ENCODE measurements at regions of chr11 and their contacts with region 1.

Region 1: GRCh38 chr11:113896156-113896879 is 8.3 kb upstream of the HTR3B start:
- DNase-seq: peak; percentile 10
- ATAC-seq: peak; percentile 91
- H3K4me3 ChIP-seq: no peak overlapping the region
- H3K27ac ChIP-seq: no peak overlapping the region
- H3K4me1 ChIP-seq: no peaks in the 10 kb centered on the region
- H3K27me3 ChIP-seq: 0 out of 2 replicates have a peak, but pooled peaks cover 5% of the 10 kb centered on the region
- CTCF ChIP-seq: peak; percentile 67 to 85 (median 75)
- POLR2A ChIP-seq: no peak
- RAD21 ChIP-seq: peak; percentile 79

Region 2: DNA sequence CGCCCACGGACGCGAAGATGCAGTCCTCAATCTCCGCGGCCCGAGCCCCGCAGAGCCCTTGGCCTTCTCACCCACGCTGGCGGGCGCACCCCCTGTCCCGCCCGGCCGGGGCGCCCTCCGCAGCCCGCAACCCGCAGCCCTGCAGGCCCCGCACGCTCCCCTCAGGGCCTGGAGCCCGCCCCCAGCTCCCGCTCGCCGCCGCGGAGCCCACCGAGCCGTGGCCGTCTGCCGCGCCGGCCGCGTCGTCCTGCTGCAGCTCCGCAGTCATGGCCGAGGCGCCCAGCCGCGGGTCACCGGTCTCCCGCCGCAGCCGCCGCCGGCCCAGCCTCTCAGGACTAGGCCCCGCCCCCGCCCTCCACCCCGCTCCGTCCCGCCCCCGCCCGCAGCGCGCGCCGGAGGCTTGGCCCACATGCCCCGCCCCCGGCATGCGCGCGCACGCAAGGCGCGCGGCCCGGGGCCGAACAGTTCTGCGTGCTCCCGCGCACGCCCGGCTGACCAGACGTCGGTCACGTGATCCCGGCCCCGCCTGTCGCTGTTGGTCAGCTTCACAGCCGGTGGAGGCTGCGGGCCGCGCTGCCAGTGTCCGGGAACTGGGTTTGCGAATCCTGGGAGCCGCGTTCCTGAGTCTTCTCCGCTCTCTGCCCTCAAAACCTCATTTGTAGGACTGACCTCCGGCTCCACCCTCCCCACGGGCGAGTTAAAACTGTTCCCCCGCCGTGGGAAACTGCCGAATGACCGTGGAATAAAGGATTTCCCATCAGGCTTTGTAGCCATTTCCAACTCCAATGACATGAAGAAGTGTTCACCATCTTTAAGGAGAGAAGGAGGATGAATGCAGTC is 20.9 kb before region 1 on chr11 and contains the start of gene USP28:
- CTCF ChIA-PET with region 1: interaction called, 10 read pairs
- POLR2A ChIA-PET with region 1: interaction called, 6 read pairs
- RAD21 ChIA-PET with region 1: no interaction called
- intact Hi-C with region 1: no loop called
- DNase-seq: peak; percentile 85
- ATAC-seq: peak; percentile 84
- H3K4me3 ChIP-seq: peak within 1 kb of the TSS; percentile 75 to 80
- H3K27ac ChIP-seq: peak within 1 kb of the TSS; percentile 77
- H3K4me1 ChIP-seq: peaks cover 0 to 22% of the 10 kb centered on the region in 2 experiments; a peak in 3 of 4 replicates
- H3K27me3 ChIP-seq: no peaks in the 10 kb centered on the region
- CTCF ChIP-seq: 0 out of 6 replicates have a peak, but pooled peaks of 1 of the 3 experiments have one; percentile 7
- POLR2A ChIP-seq: peak; percentile 87
- RAD21 ChIP-seq: no peak
- total RNA-seq, gene USP28: 23.5 TPM

Region 3: DNA sequence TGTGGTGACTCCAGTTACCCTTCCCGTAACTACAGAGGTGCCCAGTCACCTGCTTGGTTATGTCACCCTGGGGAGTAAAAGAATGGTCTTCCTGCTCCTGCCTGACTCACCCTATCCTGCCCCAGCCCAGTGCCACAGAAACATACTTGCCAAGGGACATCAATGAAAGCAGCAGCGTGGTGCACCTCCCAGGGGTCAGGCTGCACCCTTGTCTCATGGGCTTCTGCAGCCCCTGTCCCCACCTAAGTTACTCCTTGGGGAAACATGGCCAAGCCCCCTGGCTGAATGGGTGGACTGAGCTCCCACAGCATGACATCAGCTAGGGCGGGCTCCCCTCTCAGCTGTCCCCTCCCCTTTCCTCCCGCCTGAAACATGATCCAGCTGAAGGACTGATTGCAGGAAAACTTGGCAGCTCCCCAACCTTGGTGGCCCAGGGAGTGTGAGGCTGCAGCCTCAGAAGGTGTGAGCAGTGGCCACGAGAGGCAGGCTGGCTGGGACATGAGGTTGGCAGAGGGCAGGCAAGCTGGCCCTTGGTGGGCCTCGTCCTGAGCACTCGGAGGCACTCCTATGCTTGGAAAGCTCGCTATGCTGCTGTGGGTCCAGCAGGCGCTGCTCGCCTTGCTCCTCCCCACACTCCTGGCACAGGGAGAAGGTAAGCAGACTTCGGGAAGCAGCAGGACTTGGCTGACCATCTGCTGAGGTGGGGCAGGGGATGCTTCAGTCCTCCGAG is 78.6 kb after region 1 on chr11 and contains the start of gene HTR3A:
- CTCF ChIA-PET with region 1: interaction called, 5 read pairs
- POLR2A ChIA-PET with region 1: no interaction called
- RAD21 ChIA-PET with region 1: interaction called in 1 of 2 experiments, 5 read pairs
- intact Hi-C with region 1: loop called (anchors 5 kb)
- DNase-seq: peak; percentile 69
- ATAC-seq: peak; percentile 91
- H3K4me3 ChIP-seq: peak within 1 kb of the TSS; percentile 7 to 29; a peak in 3 of 4 replicates
- H3K27ac ChIP-seq: no peak within 1 kb of the TSS
- H3K4me1 ChIP-seq: peaks cover 13 to 14% of the 10 kb centered on the region in 2 experiments; a peak in 3 of 4 replicates
- H3K27me3 ChIP-seq: peaks cover 33% of the 10 kb centered on the region
- CTCF ChIP-seq: no peak
- POLR2A ChIP-seq: no peak
- RAD21 ChIP-seq: no peak
- total RNA-seq, gene HTR3A: 0.12 TPM

Region 4: DNA sequence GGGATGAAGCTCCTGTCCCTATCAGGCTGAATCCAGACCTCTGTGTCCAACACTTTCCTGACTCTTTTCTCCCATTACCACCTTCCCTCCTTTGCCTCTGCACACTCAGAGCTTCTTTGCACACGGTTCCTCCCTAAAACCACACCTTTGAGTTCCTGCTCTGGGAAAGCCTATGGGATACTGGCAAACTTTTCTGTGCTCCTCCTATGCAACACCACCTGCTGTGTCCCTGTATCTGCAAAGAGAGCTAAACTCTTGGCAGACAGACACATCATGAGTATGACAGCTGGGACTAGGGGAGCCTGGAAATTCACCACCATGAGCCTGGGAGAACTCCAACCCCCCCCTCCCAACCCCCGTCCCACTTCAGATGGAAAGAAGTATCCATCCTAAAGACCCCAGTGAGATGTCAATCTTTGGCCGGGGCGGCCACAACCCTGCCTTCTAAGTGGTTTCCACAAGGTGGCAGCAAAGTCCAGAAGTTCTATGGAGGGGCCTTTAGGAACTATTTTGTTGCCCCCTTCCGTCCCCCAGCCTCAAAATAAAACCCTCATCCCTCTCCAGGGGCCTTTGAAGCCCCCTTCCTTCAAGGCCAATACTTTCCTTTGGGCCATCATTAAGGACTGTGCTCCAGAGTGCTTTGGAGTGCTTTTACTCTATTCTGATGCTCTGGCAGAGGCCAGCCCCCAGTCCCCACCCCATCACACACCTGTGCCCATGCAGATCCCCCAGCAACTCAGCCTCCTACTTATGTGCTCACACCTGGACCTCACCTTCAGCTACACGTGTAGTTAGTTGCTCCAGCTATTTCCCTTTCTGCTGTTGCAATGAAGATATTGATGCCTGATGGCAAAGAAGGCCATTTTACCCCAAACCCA is 98.0 kb after region 1 on chr11:
- CTCF ChIA-PET with region 1: interaction called, 6 read pairs
- POLR2A ChIA-PET with region 1: no interaction called
- RAD21 ChIA-PET with region 1: interaction called in 1 of 2 experiments, 3 read pairs
- intact Hi-C with region 1: loop called (anchors 1 kb)
- DNase-seq: no peak
- ATAC-seq: peak; percentile 75
- H3K4me3 ChIP-seq: no peak overlapping the region
- H3K27ac ChIP-seq: no peak overlapping the region
- H3K4me1 ChIP-seq: no peaks in the 10 kb centered on the region
- H3K27me3 ChIP-seq: peaks cover 33% of the 10 kb centered on the region
- CTCF ChIP-seq: peak; percentile 66 to 81 (median 74)
- POLR2A ChIP-seq: no peak
- RAD21 ChIP-seq: peak; percentile 82

Region 5: GRCh38 chr11:114036156-114036811 is 140.0 kb after region 1 on chr11:
- CTCF ChIA-PET with region 1: no interaction called
- POLR2A ChIA-PET with region 1: no interaction called
- RAD21 ChIA-PET with region 1: no interaction called
- intact Hi-C with region 1: loop called (anchors 5 kb)
- DNase-seq: peak; percentile 41
- ATAC-seq: peak; percentile 93
- H3K4me3 ChIP-seq: peak overlapping the region in 1 of 2 experiments; percentile 36; a peak in 2 of 4 replicates
- H3K27ac ChIP-seq: no peak overlapping the region
- H3K4me1 ChIP-seq: peaks cover 9 to 14% of the 10 kb centered on the region in 2 experiments; a peak in 3 of 4 replicates
- H3K27me3 ChIP-seq: no peaks in the 10 kb centered on the region
- CTCF ChIP-seq: peak; percentile 74 to 83 (median 74)
- POLR2A ChIP-seq: no peak
- RAD21 ChIP-seq: peak; percentile 76

Region 6: GRCh38 chr11:114180301-114181055 is 284.2 kb after region 1 on chr11:
- CTCF ChIA-PET with region 1: interaction called, 11 read pairs
- POLR2A ChIA-PET with region 1: no interaction called
- RAD21 ChIA-PET with region 1: no interaction called
- intact Hi-C with region 1: loop called (anchors 5 kb)
- DNase-seq: no peak
- ATAC-seq: peak; percentile 94
- H3K4me3 ChIP-seq: no peak overlapping the region
- H3K27ac ChIP-seq: no peak overlapping the region
- H3K4me1 ChIP-seq: no peaks in the 10 kb centered on the region
- H3K27me3 ChIP-seq: peaks cover 55% of the 10 kb centered on the region
- CTCF ChIP-seq: peak; percentile 63 to 72 (median 71)
- POLR2A ChIP-seq: no peak
- RAD21 ChIP-seq: peak; percentile 81

Measured in HCT116 (cell line).